Activated T-helper 1 cell treated with anti-CD3 and anti-CD28 coated beads, Interleukin-12 subunit alpha, Interleukin-12 subunit beta, Interleukin-2, Interleukin-4 antibody, amounts not matched to agents 30 ng/mL and 10 ng/mL and 1 ng/mL, durations not matched to agents 14 hours and 24 hours and 36 hours (primary cell): ENCODE measurements at regions of chr20 and their contacts with region 1.

Region 1: DNA sequence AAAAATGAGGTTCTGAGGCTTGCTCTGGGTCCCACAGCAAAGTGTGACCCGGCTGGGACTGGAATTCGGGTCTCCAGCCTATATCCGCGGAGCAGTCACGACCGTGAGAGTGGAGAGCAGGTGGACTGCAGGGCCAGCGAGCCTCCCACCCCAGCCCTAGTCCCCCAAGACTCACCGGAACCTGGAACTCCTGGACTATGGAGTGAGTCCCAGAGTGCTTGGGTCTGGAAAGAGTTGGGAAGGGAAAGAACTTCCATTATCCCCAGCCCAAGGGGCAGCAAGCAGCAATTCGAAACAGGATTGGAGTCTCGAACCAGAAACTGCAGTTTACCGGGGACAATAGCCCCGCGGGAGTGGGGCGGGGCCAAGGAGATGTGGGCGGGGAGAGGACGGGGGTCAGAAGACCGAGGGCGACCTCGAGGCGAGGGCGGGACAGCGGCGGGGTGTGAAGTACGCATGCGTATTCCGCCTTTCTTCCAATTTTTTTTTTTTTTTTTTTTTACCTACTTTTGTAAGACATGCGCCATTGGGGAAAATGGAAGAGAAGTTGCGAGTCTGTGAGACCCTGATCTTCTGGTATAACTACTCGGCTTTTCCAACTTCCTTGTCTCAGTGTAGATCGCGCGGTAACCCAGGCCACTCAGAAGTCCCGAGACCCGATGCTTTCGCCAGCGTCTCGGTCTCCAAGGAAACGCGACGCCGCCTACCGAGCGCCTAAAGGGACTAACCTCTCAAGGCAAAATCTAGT is at the start of gene C20orf96:
- DNase-seq: peak; percentile 81
- H3K4me3 Mint-ChIP-seq: no peak within 1 kb of the TSS
- H3K27ac Mint-ChIP-seq: peak within 1 kb of the TSS; percentile 74
- H3K4me1 Mint-ChIP-seq: peaks cover 29% of the 10 kb centered on the region
- H3K27me3 Mint-ChIP-seq: no peaks in the 10 kb centered on the region
- total RNA-seq, gene C20orf96: 4.3 and 4.7 TPM in 2 replicates

Region 2: GRCh38 chr20:309841-310644 is 19.8 kb after region 1 on chr20:
- intact Hi-C with region 1: loop called (anchors 1 kb)
- DNase-seq: peak; percentile 80
- H3K4me3 Mint-ChIP-seq: peak overlapping the region; percentile 81
- H3K27ac Mint-ChIP-seq: peak overlapping the region; percentile 80
- H3K4me1 Mint-ChIP-seq: peaks cover 20% of the 10 kb centered on the region
- H3K27me3 Mint-ChIP-seq: peaks cover 3% of the 10 kb centered on the region

Region 3: GRCh38 chr20:504632-505075 is 214.4 kb after region 1 on chr20:
- intact Hi-C with region 1: no loop called
- DNase-seq: no peak
- H3K4me3 Mint-ChIP-seq: no peak overlapping the region
- H3K27ac Mint-ChIP-seq: no peak overlapping the region
- H3K4me1 Mint-ChIP-seq: peaks cover 17% of the 10 kb centered on the region
- H3K27me3 Mint-ChIP-seq: no peaks in the 10 kb centered on the region